Caco-2 (cell line): ENCODE measurements at regions of chr11 and their contacts with region 1.

Region 1: DNA sequence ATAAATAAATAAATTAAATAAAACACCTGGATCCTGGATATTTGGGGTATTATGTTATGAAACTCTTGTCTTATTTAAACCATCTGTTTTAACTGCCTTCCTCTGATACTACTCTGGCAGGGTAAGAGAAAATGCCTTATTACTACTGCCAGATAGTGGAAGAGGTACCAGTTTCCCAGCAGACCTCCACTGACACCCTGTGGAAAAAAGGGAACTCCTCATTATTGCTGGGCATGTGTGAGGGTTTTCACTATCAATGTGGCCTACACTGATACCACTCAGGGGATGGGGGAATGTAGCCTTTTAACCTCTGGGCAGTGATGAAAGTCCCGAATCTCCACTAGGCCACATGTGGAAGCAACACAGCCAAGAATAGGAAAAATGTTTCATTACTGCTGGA is 121.0 kb downstream of the LUZP2 start:
- DNase-seq: peak in 1 of 2 experiments; percentile 13
- H3K4me3 ChIP-seq: no peak overlapping the region
- H3K4me3 Mint-ChIP-seq: no peak overlapping the region
- H3K27ac Mint-ChIP-seq: no peak overlapping the region
- H3K4me1 ChIP-seq: peaks cover 7% of the 10 kb centered on the region; the same call in 1 of the 2 replicates
- H3K4me1 Mint-ChIP-seq: peaks cover 3% of the 10 kb centered on the region
- H3K27me3 ChIP-seq: no peaks in the 10 kb centered on the region
- H3K27me3 Mint-ChIP-seq: no peaks in the 10 kb centered on the region
- CTCF ChIP-seq: peak in 1 of 2 experiments; percentile 22

Region 2: DNA sequence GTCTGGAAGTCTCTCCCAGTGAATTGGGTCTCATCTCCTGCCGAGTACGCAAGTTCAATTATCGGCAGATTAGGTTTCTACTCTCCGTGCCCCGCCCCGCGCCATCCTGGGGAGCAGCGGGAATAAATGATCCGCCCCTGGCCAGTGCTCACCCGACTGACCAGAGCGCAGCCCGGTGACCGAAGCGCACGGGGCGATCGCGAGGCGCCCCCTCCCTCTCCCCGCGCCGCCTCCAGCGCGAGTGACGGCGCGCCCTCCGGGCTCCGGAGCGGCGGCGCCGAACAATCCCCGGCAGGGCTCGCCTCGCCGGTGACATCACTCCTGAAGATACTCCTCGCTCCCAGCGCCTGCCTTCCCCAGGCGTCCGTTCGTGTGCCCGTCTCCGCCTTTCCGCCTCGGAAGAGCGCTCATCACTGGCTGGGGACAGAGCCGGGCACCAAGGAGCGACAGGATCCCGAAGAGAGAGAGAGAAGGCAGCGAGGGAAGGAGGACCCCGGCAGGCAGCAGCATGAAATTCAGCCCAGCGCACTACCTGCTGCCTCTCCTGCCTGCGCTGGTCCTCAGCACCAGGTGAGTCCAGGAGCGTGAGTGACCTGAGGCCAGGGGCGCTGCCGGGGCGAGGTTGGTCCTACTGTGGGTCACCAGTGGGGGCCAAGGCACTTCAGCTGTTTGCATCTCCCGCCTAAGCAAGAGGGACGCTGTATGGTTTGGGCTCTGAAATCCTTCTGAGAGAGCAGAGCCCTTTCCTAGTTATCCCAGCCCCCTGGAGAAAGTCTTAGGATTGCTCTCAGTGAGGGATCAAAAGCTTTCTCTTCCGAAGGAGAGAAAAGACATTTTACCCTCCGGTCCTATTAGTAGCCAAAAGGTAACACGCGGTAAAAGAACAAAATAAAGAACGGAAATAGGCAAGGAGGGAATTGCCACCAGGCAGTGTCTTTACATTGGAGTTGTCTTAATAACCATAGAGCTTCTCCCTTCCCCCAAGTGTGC is 120.8 kb before region 1 on chr11 and contains the start of gene LUZP2:
- CTCF ChIA-PET with region 1: no interaction called
- POLR2A ChIA-PET with region 1: no interaction called
- intact Hi-C with region 1: no loop called
- DNase-seq: no peak
- H3K4me3 ChIP-seq: no peak within 1 kb of the TSS
- H3K4me3 Mint-ChIP-seq: no peak within 1 kb of the TSS
- H3K27ac Mint-ChIP-seq: no peak within 1 kb of the TSS
- H3K4me1 ChIP-seq: no peaks in the 10 kb centered on the region
- H3K4me1 Mint-ChIP-seq: no peaks in the 10 kb centered on the region
- H3K27me3 ChIP-seq: no peaks in the 10 kb centered on the region
- H3K27me3 Mint-ChIP-seq: no peaks in the 10 kb centered on the region
- CTCF ChIP-seq: no peak
- total RNA-seq, gene LUZP2: not detected in 2 replicates

Region 3: GRCh38 chr11:24509114-24509513 is 108.7 kb before region 1 on chr11:
- CTCF ChIA-PET with region 1: no interaction called
- POLR2A ChIA-PET with region 1: no interaction called
- intact Hi-C with region 1: loop called (anchors 1 kb)
- DNase-seq: no peak
- H3K4me3 ChIP-seq: no peak overlapping the region
- H3K4me3 Mint-ChIP-seq: no peak overlapping the region
- H3K27ac Mint-ChIP-seq: no peak overlapping the region
- H3K4me1 ChIP-seq: no peaks in the 10 kb centered on the region
- H3K4me1 Mint-ChIP-seq: no peaks in the 10 kb centered on the region
- H3K27me3 ChIP-seq: no peaks in the 10 kb centered on the region
- H3K27me3 Mint-ChIP-seq: no peaks in the 10 kb centered on the region
- CTCF ChIP-seq: peak; percentile 19